ENCODE measurements at regions of chr22 and their contacts with region 1.

Region 1: DNA sequence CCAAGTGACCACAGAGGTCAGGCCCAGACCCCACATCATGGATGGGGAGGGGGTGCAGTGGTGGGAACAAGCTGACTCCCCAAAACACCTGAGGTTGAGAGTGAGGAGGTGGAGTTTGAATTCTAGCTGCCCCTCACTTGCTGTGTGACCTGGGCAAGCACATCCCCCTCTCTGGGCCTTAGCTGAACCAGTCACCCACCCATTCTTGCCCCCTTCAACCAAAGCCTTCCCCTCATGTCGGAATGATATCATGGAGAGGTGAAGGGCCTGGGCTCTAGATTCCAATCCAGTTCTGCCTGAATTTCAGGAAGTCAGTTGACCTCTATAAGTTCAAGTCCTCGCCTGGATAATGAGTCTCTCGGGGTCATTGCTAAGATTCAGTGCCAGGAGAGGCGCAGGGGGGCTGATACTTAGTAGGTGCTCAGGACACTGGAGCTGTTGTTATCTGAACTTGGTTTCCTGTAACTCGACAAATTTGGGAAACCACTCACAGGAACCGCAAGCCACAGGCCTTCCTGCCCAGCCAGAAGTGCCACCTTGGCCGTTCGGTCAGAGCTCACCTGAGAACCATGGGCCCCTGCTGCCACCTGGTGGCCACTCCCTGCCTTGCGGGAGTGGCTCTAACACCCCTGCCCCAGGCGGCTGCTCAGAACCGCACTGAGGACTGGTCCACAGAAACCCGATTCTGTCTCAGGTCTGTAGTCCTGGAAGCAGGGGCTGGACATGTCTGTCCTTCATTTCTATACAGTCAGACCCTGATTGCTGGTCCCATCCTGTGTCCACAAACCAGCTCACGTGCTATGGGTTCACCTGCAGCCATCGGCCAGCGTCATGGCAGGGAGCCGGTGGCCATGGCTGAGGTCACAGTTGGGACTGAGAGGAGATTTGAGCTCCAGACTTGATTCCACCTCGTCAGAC is 6.9 kb downstream of the CDC42EP1 start:
- H3K4me3 ChIP-seq: no peak overlapping the region
- H3K27ac ChIP-seq: no peak overlapping the region
- H3K4me1 ChIP-seq: peaks cover 17% of the 10 kb centered on the region
- CTCF ChIP-seq: peak; percentile 87

Region 2: GRCh38 chr22:37472418-37473006 is 94.7 kb before region 1 on chr22:
- CTCF ChIA-PET with region 1: interaction called, 18 read pairs
- POLR2A ChIA-PET with region 1: no interaction called
- H3K4me3 ChIP-seq: no peak overlapping the region
- H3K27ac ChIP-seq: no peak overlapping the region
- H3K4me1 ChIP-seq: no peaks in the 10 kb centered on the region
- CTCF ChIP-seq: peak; percentile 63

Region 3: GRCh38 chr22:37538590-37539357 is 28.4 kb before region 1 on chr22:
- CTCF ChIA-PET with region 1: interaction called, 608 read pairs
- POLR2A ChIA-PET with region 1: interaction called, 8 read pairs
- H3K4me3 ChIP-seq: no peak overlapping the region
- H3K27ac ChIP-seq: no peak overlapping the region; the same call in 1 of the 2 replicates
- H3K4me1 ChIP-seq: peaks cover 7% of the 10 kb centered on the region
- CTCF ChIP-seq: peak; percentile 100

Region 4: DNA sequence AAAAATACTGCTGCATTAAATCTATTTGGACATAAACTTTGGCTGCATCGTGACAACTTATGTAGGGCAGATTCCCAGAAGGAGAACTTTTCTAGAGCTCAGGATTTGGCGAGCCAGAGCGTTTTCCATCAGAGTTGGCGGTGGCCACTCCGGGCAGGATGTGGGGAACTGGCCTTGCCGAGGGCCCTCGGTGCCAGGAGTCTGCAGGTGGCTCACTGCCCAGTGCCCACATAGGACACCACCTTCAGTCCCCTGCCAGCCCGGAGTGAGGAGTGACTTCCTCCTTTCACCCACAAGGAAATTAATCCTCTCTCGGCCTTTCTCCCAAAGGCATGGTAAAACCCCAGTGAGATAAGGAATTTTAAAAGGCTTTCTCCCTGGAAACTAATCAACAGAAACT is 14.3 kb after region 1 on chr22:
- CTCF ChIA-PET with region 1: interaction called, 14 read pairs
- POLR2A ChIA-PET with region 1: interaction called, 5 read pairs
- H3K4me3 ChIP-seq: no peak overlapping the region
- H3K27ac ChIP-seq: no peak overlapping the region
- H3K4me1 ChIP-seq: 0 out of 2 replicates have a peak, but pooled peaks cover 3% of the 10 kb centered on the region
- CTCF ChIP-seq: no peak

Region 5: GRCh38 chr22:37594237-37594636 is 27.1 kb after region 1 on chr22:
- CTCF ChIA-PET with region 1: interaction called, 145 read pairs
- POLR2A ChIA-PET with region 1: interaction called, 22 read pairs
- H3K4me3 ChIP-seq: no peak overlapping the region
- H3K27ac ChIP-seq: no peak overlapping the region
- H3K4me1 ChIP-seq: no peaks in the 10 kb centered on the region; the same call in 1 of the 2 replicates
- CTCF ChIP-seq: no peak

Region 6: GRCh38 chr22:37630839-37631435 is 63.8 kb after region 1 on chr22:
- CTCF ChIA-PET with region 1: no interaction called
- POLR2A ChIA-PET with region 1: no interaction called
- H3K4me3 ChIP-seq: no peak overlapping the region
- H3K27ac ChIP-seq: no peak overlapping the region
- H3K4me1 ChIP-seq: peaks cover 13% of the 10 kb centered on the region
- CTCF ChIP-seq: no peak

Region 7: DNA sequence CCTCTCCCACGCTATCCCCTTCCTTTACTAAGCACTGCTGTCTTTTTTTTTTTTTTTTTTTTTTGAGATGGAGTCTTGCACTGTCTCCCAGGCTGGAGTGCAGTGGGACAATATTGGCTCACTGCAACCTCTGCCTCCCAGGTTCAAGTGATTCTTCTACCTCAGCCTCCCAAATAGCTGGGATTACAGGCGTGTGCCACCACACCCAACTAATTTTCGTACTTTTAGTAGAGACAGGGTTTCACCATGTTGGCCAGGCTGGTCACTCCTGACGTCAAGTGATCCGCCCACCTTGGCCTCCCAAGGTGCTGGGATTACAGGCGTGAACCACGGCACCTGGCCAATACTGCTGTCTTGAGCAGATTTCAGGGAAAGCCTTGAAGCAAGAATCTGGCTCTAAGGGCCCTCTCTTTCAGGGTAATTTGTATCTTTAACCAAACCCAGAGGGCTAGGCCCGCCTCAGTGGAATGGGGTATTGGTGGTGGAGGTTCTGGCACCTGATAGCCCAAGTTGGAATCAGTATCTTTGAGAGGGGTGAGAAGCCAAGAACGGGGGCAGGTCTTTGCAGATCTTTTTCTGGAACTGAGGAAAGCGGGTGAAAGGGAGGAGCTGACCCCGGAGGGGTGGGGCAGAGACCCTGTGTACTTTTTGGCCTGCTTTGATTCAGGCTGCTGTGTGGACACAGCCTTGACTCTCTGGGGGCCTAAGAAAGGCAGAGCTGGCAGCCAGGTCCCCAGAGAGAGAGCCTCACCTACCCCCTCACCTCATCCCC is 166.6 kb after region 1 on chr22:
- CTCF ChIA-PET with region 1: no interaction called
- POLR2A ChIA-PET with region 1: no interaction called
- H3K4me3 ChIP-seq: no peak overlapping the region
- H3K27ac ChIP-seq: no peak overlapping the region
- H3K4me1 ChIP-seq: no peaks in the 10 kb centered on the region
- CTCF ChIP-seq: no peak